ENCODE measurements at regions of chr10 and their contacts with region 1.

Region 1: DNA sequence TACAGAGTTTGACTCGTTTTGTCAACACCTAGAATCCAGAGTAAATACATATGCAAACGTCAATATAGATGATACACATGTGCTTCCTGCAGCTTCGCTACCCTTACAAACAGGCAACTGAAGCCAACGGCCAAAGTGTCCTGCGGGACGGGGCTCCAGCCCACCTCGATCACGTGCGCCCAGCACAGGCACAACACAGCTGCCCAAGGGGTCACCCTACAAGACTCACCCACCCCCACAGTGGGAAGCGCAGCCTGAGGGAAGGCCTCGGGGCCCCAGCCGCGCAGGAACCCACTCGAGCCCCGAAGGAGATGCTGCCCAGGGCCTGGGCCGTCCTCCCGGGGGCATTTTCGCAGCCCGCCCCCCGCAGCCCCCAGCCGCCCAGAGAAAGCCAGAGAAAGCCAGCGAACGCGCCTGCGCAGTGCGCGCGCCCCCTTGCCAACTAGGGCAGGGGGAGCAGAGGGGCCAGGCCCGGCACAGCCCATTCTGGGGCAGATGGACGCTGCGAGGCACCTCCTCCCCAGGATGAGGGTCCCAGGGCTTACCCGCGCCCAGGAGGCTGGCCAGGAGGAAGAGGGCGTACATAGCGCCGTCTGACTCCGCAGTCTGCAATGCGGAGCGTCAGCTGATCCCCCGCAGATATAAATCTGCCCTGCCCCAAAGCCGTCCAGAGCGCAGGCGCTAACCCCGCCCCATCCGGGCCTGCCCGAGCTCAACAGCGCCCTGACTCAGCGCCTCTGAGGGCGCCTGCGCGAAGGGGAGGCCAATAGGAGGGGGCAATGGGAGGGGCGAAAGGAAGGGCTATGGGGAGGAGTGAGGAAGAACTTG is at the start of gene PSAP:
- DNase-seq: peak; percentile 99
- ATAC-seq: peak; percentile 99
- H3K4me3 Mint-ChIP-seq: peak within 1 kb of the TSS; percentile 92
- H3K27ac Mint-ChIP-seq: peak within 1 kb of the TSS; percentile 75
- H3K4me1 Mint-ChIP-seq: peaks cover 35% of the 10 kb centered on the region
- H3K27me3 Mint-ChIP-seq: peaks cover 3% of the 10 kb centered on the region
- total RNA-seq, gene PSAP: 171 to 175 TPM

Region 2: GRCh38 chr10:71835671-71836595 is 14.9 kb before region 1 on chr10:
- POLR2A ChIA-PET with region 1: interaction called, 11 read pairs
- DNase-seq: no peak
- ATAC-seq: no peak
- H3K4me3 Mint-ChIP-seq: no peak overlapping the region
- H3K27ac Mint-ChIP-seq: no peak overlapping the region
- H3K4me1 Mint-ChIP-seq: peaks cover 31% of the 10 kb centered on the region
- H3K27me3 Mint-ChIP-seq: no peaks in the 10 kb centered on the region

Region 3: GRCh38 chr10:71865561-71866041 is 14.8 kb after region 1 on chr10:
- POLR2A ChIA-PET with region 1: no interaction called
- DNase-seq: no peak
- ATAC-seq: no peak
- H3K4me3 Mint-ChIP-seq: no peak overlapping the region
- H3K27ac Mint-ChIP-seq: no peak overlapping the region
- H3K4me1 Mint-ChIP-seq: peaks cover 6% of the 10 kb centered on the region
- H3K27me3 Mint-ChIP-seq: peaks cover 4% of the 10 kb centered on the region